Activated T-helper 1 cell treated with anti-CD3 and anti-CD28 coated beads, Interleukin-12 subunit alpha, Interleukin-12 subunit beta, Interleukin-2, Interleukin-4 antibody, amounts not matched to agents 30 ng/mL and 10 ng/mL and 1 ng/mL, durations not matched to agents 14 hours and 24 hours and 36 hours (primary cell): ENCODE measurements at regions of chr7 and their contacts with region 1.

Region 1: GRCh38 chr7:44748045-44748947 is at the start of gene ZMIZ2:
- DNase-seq: peak; percentile 88
- H3K4me3 Mint-ChIP-seq: peak within 1 kb of the TSS; percentile 92
- H3K27ac Mint-ChIP-seq: peak within 1 kb of the TSS; percentile 95
- H3K4me1 Mint-ChIP-seq: peaks cover 45% of the 10 kb centered on the region
- H3K27me3 Mint-ChIP-seq: no peaks in the 10 kb centered on the region
- total RNA-seq, gene ZMIZ2: 123 and 129 TPM in 2 replicates

Region 2: DNA sequence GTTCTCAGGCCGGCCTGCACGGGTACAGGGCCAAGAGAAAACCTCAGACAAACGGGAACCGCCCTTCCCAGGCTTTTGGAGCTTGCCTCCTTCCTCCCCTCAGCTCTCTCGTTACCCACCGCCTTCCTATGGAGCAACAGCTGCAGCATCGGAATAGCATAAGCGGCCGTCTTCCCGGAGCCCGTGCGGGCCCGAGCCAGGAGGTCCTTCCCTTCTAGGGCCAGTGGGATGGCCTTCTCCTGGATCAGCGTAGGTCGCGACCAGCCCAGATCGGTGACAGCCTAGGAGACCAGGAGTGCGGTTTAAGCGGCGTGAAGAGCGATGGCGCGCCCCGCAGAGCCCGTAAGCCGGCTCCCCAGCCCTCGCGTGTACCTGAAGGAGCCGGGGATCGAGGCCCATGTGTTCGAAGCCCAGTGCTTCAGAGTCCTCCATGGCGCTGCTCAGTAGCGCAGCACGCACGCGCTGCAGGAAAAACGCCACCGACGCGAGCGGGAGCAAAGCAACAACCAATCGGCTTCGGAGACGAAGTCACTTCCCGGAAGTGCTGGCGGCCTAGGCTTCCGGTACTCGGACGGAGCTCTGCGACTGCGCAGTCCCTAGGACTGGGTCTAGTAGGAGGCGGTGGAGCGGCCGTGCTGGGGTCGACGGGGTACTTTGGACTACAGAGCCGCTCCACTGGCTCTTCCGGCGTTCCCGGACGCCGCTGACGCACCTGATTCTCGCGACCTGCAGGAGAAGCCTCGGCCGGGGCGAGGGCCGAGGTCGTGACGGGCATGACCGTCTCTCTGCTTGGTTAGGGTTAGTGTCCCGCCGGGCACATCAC is 174.6 kb before region 1 on chr7 and contains the start of gene DDX56:
- intact Hi-C with region 1: loop called (anchors 1 kb)
- DNase-seq: peak; percentile 93
- H3K4me3 Mint-ChIP-seq: peak within 1 kb of the TSS; percentile 88
- H3K27ac Mint-ChIP-seq: peak within 1 kb of the TSS; percentile 95
- H3K4me1 Mint-ChIP-seq: peaks cover 32% of the 10 kb centered on the region
- H3K27me3 Mint-ChIP-seq: no peaks in the 10 kb centered on the region
- total RNA-seq, gene DDX56: 165 and 166 TPM in 2 replicates

Region 3: GRCh38 chr7:44581879-44582603 is 166.3 kb before region 1 on chr7 and contains the start of gene TMED4:
- intact Hi-C with region 1: loop called (anchors 1 kb)
- DNase-seq: peak; percentile 100
- H3K4me3 Mint-ChIP-seq: peak within 1 kb of the TSS; percentile 93
- H3K27ac Mint-ChIP-seq: peak within 1 kb of the TSS; percentile 93
- H3K4me1 Mint-ChIP-seq: peaks cover 33% of the 10 kb centered on the region
- H3K27me3 Mint-ChIP-seq: no peaks in the 10 kb centered on the region
- total RNA-seq, gene TMED4: 74.9 and 79.6 TPM in 2 replicates

Region 4: GRCh38 chr7:44587843-44588711 is 160.2 kb before region 1 on chr7:
- intact Hi-C with region 1: loop called (anchors 1 kb)
- DNase-seq: peak; percentile 42
- H3K4me3 Mint-ChIP-seq: no peak overlapping the region
- H3K27ac Mint-ChIP-seq: no peak overlapping the region
- H3K4me1 Mint-ChIP-seq: peaks cover 10% of the 10 kb centered on the region
- H3K27me3 Mint-ChIP-seq: peaks cover 3% of the 10 kb centered on the region

Region 5: GRCh38 chr7:44735403-44736165 is 12.7 kb before region 1 on chr7:
- intact Hi-C with region 1: loop called (anchors 1 kb)
- DNase-seq: peak; percentile 42
- H3K4me3 Mint-ChIP-seq: peak overlapping the region; percentile 50
- H3K27ac Mint-ChIP-seq: peak overlapping the region; percentile 89
- H3K4me1 Mint-ChIP-seq: peaks cover 29% of the 10 kb centered on the region
- H3K27me3 Mint-ChIP-seq: peaks cover 2% of the 10 kb centered on the region

Region 6: DNA sequence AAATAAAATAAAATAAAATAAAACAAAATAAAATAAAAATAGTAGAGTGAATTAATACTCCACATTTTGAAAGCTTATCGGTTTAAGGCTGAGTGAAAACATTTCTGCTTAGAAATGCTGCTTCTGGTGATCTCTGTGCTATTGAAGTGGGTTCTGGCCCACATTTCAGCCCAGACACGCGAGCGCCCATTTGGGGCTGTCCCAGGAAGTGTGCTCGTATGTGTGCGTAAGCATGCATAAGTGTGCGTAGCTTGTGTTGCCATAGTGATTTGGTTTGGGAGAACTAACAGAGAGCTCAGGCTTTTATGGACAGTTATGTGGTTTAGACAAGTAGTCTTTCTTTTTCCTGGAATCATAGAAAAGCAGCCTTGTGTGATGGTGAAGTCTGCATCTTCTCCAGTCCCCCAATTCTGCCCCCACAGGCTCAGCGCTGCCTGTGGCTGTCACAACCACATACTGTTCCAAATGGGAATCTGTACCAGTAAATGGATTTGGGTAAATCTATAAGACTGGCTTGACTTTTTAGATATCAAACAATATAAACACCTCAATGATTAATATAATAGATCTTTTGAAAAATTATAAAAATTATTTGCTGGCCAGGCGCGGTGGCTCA is 166.8 kb after region 1 on chr7:
- intact Hi-C with region 1: loop called (anchors 1 kb)
- DNase-seq: peak; percentile 78
- H3K4me3 Mint-ChIP-seq: peak overlapping the region; percentile 67
- H3K27ac Mint-ChIP-seq: peak overlapping the region; percentile 85
- H3K4me1 Mint-ChIP-seq: peaks cover 16% of the 10 kb centered on the region
- H3K27me3 Mint-ChIP-seq: peaks cover 2% of the 10 kb centered on the region

Region 7: GRCh38 chr7:44999245-45000095 is 251.2 kb after region 1 on chr7:
- intact Hi-C with region 1: loop called (anchors 1 kb)
- DNase-seq: peak; percentile 99
- H3K4me3 Mint-ChIP-seq: peak overlapping the region; percentile 88
- H3K27ac Mint-ChIP-seq: peak overlapping the region; percentile 91
- H3K4me1 Mint-ChIP-seq: peaks cover 58% of the 10 kb centered on the region
- H3K27me3 Mint-ChIP-seq: no peaks in the 10 kb centered on the region